Esophagus muscularis mucosa (tissue), 4 donors: ENCODE measurements at regions of chr20 and their contacts with region 1.

Region 1: GRCh38 chr20:63627129-63627750 is 339 bp upstream of the GMEB2 start:
- DNase-seq: peak; percentile 99
- H3K4me3 ChIP-seq: peak overlapping the region; percentile 70 to 92 (median 78)
- H3K27ac ChIP-seq: peak overlapping the region; percentile 93 to 98 (median 98)
- H3K4me1 ChIP-seq: peaks cover 25 to 43% (median 39%) of the 10 kb centered on the region in 4 donors
- H3K27me3 ChIP-seq: no peaks in the 10 kb centered on the region
- CTCF ChIP-seq: no peak
- EP300 ChIP-seq: no peak
- POLR2A ChIP-seq: peak; percentile 76

Region 2: DNA sequence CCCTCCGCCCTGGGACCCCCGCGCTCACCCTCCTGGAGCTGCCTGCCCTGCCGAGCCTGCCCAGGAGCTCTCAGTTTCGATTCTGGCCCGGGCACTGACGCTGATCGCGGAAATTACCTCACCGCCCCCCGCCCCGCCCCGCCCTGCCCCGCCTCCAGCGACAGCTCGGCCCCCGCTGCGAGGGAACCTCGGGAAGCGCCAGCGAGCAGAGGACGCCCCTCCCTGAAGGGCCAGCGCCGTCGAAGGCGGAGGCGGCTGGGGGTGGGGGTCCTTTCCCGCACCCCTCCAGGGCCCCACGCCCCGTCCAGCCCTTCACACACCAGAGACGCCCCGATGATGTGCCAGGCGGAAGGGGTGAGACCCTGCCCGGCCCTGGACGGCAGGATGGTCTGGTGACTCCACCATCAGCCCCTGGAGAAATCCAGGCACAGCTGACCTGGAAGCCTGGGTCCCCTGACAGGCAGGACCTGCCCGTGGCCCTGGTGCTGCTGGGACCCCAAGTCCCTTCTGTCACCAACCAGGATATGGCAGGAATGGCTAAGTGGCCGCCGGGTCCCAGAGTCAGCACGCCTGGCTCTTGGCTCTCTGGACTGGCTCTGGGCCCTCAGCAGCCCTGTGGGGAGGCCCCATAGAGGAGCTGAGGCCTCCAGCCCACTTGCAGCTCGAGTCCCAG is 52.9 kb before region 1 on chr20 and contains the start of gene HELZ2:
- intact Hi-C with region 1: loop called (anchors 5 kb)
- DNase-seq: peak; percentile 97
- H3K4me3 ChIP-seq: peak within 1 kb of the TSS; percentile 81 to 93 (median 85)
- H3K27ac ChIP-seq: peak within 1 kb of the TSS; percentile 76 to 89 (median 83)
- H3K4me1 ChIP-seq: peaks cover 21 to 36% (median 26%) of the 10 kb centered on the region in 4 donors
- H3K27me3 ChIP-seq: peaks cover 0 to 6% (median 0%) of the 10 kb centered on the region in 4 donors
- CTCF ChIP-seq: no peak
- EP300 ChIP-seq: no peak
- POLR2A ChIP-seq: no peak
- total RNA-seq, gene HELZ2: 19.5 to 36.9 (median 30.3) TPM